Naive thymus-derived CD4-positive, alpha-beta T cell (primary cell): ENCODE measurements at regions of chr5 and their contacts with region 1.

Region 1: GRCh38 chr5:963673-964531 is 44.7 kb upstream of the NKD2 start:
- DNase-seq: peak in 8 of 9 donors; percentile 43 to 71 (median 66)
- ATAC-seq: peak; percentile 92
- H3K4me3 ChIP-seq: peak overlapping the region; percentile 18
- H3K4me3 Mint-ChIP-seq: peak overlapping the region; percentile 78 to 97 (median 84)
- H3K27ac ChIP-seq: peak overlapping the region; percentile 27
- H3K27ac Mint-ChIP-seq: peak overlapping the region; percentile 65 to 98 (median 83)
- H3K4me1 ChIP-seq: peaks cover 5 to 19% of the 10 kb centered on the region in 2 donors
- H3K4me1 Mint-ChIP-seq: peaks cover 15 to 56% (median 24%) of the 10 kb centered on the region in 7 donors
- H3K27me3 ChIP-seq: peaks cover 0 to 10% of the 10 kb centered on the region in 2 donors
- H3K27me3 Mint-ChIP-seq: peaks cover 27 to 38% (median 36%) of the 10 kb centered on the region in 5 donors

Region 2: GRCh38 chr5:892394-893136 is 71.3 kb before region 1 on chr5 and contains the starts of genes BRD9 and TRIP13:
- CTCF ChIA-PET with region 1: no interaction called
- POLR2A ChIA-PET with region 1: no interaction called
- intact Hi-C with region 1: no loop called
- DNase-seq: peak; percentile 77 to 90 (median 86)
- ATAC-seq: peak; percentile 98
- H3K4me3 ChIP-seq: peak within 1 kb of the TSS; percentile 84
- H3K4me3 Mint-ChIP-seq: peak within 1 kb of the TSS; percentile 79 to 93 (median 86)
- H3K27ac ChIP-seq: peak within 1 kb of the TSS; percentile 91
- H3K27ac Mint-ChIP-seq: peak within 1 kb of the TSS; percentile 69 to 92 (median 89)
- H3K4me1 ChIP-seq: peaks cover 10 to 14% of the 10 kb centered on the region in 2 donors
- H3K4me1 Mint-ChIP-seq: peaks cover 12 to 35% (median 28%) of the 10 kb centered on the region in 7 donors
- H3K27me3 ChIP-seq: no peaks in the 10 kb centered on the region
- H3K27me3 Mint-ChIP-seq: no peaks in the 10 kb centered on the region
- total RNA-seq, gene BRD9: 63.2 to 93.2 (median 82.2) TPM
- total RNA-seq, gene TRIP13: 0.39 to 23.5 (median 0.57) TPM in 4 of 5 experiments, not detected in the other

Region 3: GRCh38 chr5:1004461-1005248 is 40.8 kb after region 1 on chr5:
- CTCF ChIA-PET with region 1: no interaction called
- POLR2A ChIA-PET with region 1: no interaction called
- intact Hi-C with region 1: loop called (anchors 5 kb)
- DNase-seq: peak; percentile 27 to 59 (median 50)
- ATAC-seq: peak; percentile 67
- H3K4me3 ChIP-seq: peak overlapping the region; percentile 35
- H3K4me3 Mint-ChIP-seq: peak overlapping the region; percentile 67 to 87 (median 79)
- H3K27ac ChIP-seq: no peak overlapping the region
- H3K27ac Mint-ChIP-seq: no peak overlapping the region
- H3K4me1 ChIP-seq: peaks cover 6 to 32% of the 10 kb centered on the region in 2 donors
- H3K4me1 Mint-ChIP-seq: peaks cover 11 to 33% (median 22%) of the 10 kb centered on the region in 7 donors
- H3K27me3 ChIP-seq: peaks cover 0 to 5% of the 10 kb centered on the region in 2 donors
- H3K27me3 Mint-ChIP-seq: peaks cover 12 to 49% (median 18%) of the 10 kb centered on the region in 5 donors